AG04449 (cell line): ENCODE measurements at regions of chr16 and their contacts with region 1.

Region 1: DNA sequence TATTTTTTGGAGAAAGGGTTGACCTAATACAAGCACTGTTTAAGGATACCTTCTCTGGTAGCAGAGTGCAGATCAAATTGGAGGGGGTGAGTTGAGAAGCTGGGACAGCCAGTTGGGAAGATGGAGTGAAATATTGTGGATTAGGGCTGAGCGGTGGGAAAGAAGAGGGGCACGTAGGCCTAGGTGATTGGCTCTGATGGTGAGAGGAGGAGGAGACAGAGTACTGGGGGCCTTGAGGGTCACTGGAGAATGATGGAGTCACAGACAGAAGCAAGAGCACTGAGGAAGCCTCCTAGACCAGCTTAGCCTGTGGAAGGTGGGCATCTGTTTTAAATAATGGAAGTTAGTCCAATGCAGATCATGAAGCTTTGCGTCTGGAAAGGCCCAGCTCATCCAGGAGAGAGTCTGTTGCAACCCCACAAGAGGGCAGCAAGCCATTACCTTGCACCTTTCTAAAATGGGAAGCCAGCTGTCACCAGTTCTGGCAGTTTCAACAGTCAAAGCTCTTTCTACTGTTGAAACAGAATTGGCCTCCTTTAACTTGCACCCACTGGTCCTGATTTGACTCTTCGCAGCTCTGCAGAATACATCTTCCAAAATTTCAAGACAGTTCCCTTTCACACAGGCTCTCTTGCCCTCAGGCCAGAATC is 11.8 kb downstream of the SLC9A5 start:
- DNase-seq: peak; percentile 19
- H3K4me3 ChIP-seq: no peak overlapping the region
- CTCF ChIP-seq: peak; percentile 77

Region 2: DNA sequence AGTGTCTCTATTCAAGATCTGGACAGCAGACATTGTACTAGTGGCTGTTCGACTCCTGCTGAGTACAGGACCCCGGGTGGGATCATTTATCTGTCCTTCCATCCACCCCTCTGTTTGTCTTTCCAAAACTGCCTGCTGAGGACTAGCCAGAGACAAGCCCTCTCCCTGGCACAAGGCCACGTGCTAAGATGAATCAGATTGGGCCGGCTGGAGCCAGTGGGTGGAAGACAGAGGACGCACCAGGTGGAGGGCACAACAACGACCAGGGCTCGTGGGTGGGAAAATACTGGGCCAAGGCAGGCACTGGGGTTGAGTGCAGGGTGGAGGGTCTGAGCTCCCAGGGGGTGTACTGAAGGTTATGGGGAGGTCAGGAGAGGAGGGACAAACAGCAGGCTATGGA is 417.8 kb before region 1 on chr16:
- CTCF ChIA-PET with region 1: no interaction called
- POLR2A ChIA-PET with region 1: no interaction called
- DNase-seq: no peak
- H3K4me3 ChIP-seq: no peak overlapping the region
- CTCF ChIP-seq: no peak

Region 3: DNA sequence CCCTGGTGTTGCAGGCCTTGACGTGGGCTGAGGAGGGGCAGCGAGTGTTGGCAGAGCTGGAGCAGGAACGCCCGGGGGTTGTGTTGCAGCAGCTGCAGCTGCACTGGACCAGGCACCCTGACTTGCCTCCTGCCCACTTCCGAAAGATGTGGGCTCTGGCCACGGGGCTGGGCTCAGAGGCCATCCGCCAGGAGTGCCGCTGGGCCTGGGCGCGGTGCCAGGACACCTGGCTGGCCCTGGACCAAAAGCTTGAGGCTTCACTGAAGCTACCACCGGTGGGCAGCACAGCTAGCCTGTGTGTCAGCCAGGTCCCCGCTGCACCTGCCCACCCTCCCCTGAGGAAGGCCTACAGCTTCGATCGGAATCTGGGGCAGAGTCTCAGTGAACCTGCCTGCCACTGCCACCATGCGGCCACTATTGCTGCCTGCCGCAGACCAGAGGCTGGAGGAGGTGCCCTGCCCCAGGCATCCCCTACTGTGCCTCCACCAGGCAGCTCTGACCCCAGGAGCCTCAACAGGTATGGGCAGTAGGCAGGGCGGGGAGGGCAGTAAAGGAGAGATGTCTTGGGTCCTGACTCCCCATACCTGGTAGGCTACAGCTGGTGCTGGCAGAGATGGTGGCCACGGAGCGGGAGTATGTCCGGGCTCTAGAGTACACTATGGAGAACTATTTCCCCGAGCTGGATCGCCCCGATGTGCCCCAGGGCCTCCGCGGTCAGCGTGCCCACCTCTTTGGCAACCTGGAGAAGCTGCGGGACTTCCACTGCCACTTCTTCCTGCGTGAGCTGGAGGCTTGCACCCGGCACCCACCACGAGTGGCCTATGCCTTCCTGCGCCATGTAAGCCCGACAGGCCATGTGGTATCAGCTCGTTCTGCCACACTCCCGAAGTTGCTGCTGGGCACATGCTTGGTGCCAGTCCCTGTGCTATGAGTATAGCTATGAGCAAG is 24.4 kb after region 1 on chr16:
- CTCF ChIA-PET with region 1: interaction called, 46 read pairs
- POLR2A ChIA-PET with region 1: interaction called, 3 read pairs
- DNase-seq: no peak
- H3K4me3 ChIP-seq: no peak overlapping the region
- CTCF ChIP-seq: peak; percentile 60

Region 4: GRCh38 chr16:67393035-67393787 is 132.7 kb after region 1 on chr16 and contains the start of gene TPPP3:
- CTCF ChIA-PET with region 1: interaction called, 11 read pairs
- POLR2A ChIA-PET with region 1: no interaction called
- DNase-seq: no peak
- H3K4me3 ChIP-seq: peak within 1 kb of the TSS; percentile 42
- CTCF ChIP-seq: peak; percentile 72

Region 5: GRCh38 chr16:67415872-67416793 is 155.6 kb after region 1 on chr16 and contains the start of gene ZDHHC1:
- CTCF ChIA-PET with region 1: interaction called, 13 read pairs
- POLR2A ChIA-PET with region 1: no interaction called
- DNase-seq: no peak
- H3K4me3 ChIP-seq: peak within 1 kb of the TSS; percentile 73
- CTCF ChIP-seq: peak; percentile 69

Region 6: DNA sequence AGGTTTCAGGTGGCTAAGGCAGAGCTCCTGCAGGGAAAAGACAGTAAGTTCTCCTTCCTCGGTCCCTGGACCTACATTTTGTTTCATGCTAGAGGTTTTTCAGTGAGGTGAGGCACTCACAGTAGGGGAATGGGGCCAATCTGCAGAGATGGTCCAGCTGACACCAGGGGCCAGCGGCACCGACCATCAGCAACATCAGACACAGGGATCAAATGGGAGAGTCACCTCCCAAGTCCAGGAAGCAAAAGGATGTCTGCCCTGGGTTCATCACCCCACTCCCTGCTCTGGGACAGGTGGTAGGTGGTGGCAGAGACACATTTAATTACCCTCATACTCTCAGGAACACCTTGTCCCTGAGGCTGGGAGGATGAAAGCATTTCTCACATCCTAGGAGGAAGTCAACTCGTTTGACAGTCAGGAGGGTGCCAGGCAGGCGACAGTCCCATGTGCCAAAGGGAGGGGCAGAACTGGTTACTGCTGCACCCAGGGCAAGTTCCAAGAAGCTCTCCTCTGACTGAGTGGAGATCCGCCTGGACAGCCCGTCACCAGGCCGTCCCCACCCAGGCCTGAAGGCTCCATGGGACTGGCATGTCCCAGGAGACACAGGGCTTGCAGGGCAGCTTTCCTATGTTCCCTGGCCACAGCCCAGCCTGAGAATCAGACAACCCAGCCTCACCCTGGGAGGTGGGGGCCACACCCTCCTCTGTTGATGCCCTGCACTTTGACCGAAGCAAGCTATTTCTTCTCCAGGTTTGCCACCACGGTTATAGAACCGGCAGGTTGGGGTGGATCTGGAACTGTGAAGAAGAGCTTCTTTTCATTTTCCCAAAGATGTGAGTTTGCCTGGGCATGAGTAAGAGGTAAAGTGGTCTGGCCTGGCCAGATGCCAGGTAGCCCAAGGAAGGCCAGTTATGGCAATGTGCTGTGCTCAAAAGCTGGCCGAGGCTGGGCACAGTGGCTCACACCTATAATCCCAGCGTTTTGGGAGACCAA is 201.3 kb after region 1 on chr16:
- CTCF ChIA-PET with region 1: interaction called, 66 read pairs
- POLR2A ChIA-PET with region 1: no interaction called
- DNase-seq: no peak
- H3K4me3 ChIP-seq: no peak overlapping the region
- CTCF ChIP-seq: no peak